ENCODE measurements at regions of chr18 and their contacts with region 1.

Region 1: GRCh38 chr18:50307738-50308470 is 20.4 kb upstream of the CXXC1 start:
- DNase-seq: peak; percentile 73
- ATAC-seq: peak; percentile 88
- H3K4me3 ChIP-seq: peak overlapping the region; percentile 52; the same call in 1 of the 2 replicates
- H3K27ac ChIP-seq: peak overlapping the region; percentile 66
- H3K4me1 ChIP-seq: peaks cover 34% of the 10 kb centered on the region
- H3K27me3 ChIP-seq: no peaks in the 10 kb centered on the region
- CTCF ChIP-seq: no peak
- EP300 ChIP-seq: no peak
- POLR2A ChIP-seq: no peak; the same call in none of the 2 replicates
- RAD21 ChIP-seq: no peak

Region 2: DNA sequence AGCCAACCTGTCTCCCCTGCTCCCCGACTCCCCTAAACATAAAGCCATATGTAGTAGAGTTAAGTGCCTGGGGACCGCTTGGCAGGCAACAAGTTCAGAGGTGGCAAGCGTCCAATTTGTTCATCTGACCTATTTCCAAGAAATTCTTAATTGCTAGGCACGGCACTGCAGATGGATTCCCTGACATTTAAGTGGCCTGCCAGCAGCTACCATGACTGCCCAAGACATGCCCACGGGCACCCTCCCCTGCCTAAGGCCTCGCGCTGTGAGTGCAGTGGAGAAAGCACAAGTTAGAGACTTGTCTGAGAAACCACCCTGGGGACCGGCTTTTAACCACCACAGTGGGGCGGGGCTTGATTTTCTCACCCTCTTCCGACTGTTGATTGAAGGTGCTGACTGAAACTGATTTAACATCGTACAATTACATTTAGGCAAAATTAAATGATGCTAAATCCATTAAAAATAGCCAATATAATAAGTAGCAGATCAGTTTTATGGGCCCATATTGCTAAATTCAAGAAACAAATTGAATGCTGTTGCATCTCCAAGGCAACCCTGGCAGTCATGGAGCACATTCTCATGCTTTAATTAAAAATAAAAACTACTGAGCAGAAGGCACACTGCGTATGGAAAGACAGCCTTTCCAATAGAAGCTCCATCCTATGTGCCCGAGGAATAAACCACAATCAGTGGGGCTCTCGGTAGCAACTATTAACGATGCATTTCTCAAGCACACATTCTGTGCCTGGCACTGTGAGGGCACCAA is 330.9 kb before region 1 on chr18:
- CTCF ChIA-PET with region 1: no interaction called
- POLR2A ChIA-PET with region 1: no interaction called
- RAD21 ChIA-PET with region 1: no interaction called
- SMC1A ChIA-PET with region 1: no interaction called
- in situ Hi-C with region 1: no loop called
- intact Hi-C with region 1: no loop called
- DNase-seq: no peak
- ATAC-seq: peak; percentile 26; the same call in 2 of the 3 replicates
- H3K4me3 ChIP-seq: no peak overlapping the region
- H3K27ac ChIP-seq: no peak overlapping the region
- H3K4me1 ChIP-seq: no peaks in the 10 kb centered on the region
- H3K27me3 ChIP-seq: peaks cover 2 to 4% of the 10 kb centered on the region in 2 experiments; a peak in 3 of 4 replicates
- CTCF ChIP-seq: no peak
- EP300 ChIP-seq: no peak
- POLR2A ChIP-seq: no peak
- RAD21 ChIP-seq: no peak

Region 3: DNA sequence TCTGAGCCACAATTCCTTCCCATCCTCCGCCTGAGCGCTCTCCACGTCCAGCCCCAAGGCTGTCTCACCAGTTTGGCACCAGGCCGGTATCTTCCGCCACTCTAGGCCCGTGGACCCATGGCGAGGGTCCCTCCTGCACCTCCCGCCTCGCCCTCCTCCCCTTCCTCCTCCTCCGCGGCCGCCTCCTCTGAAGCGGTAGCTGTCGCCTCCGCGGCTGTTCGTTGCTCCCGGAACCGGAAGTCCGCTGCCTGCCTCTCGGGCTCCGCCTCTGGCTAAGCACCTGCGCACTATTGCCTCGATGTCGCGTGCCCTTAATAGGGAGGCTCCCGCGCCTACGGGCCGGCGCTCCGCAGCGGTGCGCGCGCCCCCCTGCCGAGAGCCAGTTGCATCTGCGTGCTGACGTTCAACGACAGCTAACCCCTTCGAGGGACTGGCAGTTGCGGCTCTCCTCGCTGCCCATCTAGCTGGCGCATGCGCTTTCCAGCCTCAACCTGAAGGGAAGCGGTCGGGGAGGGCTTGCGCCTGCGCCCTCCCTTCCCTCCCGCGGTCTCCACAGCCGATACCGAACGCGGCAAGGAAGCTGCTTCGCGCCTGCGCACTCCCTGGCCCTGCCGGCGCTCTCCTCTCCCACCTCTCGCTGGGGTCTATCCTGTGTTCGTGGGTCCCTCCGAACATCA is 26.5 kb before region 1 on chr18 and contains the start of gene MBD1:
- CTCF ChIA-PET with region 1: interaction called, 3 read pairs
- POLR2A ChIA-PET with region 1: interaction called, 15 read pairs
- RAD21 ChIA-PET with region 1: interaction called, 4 read pairs
- SMC1A ChIA-PET with region 1: no interaction called
- in situ Hi-C with region 1: no loop called
- intact Hi-C with region 1: loop called (anchors 1 kb)
- DNase-seq: peak; percentile 96
- ATAC-seq: peak; percentile 96
- H3K4me3 ChIP-seq: peak within 1 kb of the TSS; percentile 99
- H3K27ac ChIP-seq: peak within 1 kb of the TSS; percentile 88
- H3K4me1 ChIP-seq: peaks cover 16% of the 10 kb centered on the region
- H3K27me3 ChIP-seq: no peaks in the 10 kb centered on the region
- CTCF ChIP-seq: peak in 2 of 3 experiments; percentile 17 to 26; a peak in 1 of 6 replicates
- EP300 ChIP-seq: no peak
- POLR2A ChIP-seq: no peak
- RAD21 ChIP-seq: no peak
- polyA plus RNA-seq, gene MBD1: 8.4 to 12.4 TPM

Region 4: DNA sequence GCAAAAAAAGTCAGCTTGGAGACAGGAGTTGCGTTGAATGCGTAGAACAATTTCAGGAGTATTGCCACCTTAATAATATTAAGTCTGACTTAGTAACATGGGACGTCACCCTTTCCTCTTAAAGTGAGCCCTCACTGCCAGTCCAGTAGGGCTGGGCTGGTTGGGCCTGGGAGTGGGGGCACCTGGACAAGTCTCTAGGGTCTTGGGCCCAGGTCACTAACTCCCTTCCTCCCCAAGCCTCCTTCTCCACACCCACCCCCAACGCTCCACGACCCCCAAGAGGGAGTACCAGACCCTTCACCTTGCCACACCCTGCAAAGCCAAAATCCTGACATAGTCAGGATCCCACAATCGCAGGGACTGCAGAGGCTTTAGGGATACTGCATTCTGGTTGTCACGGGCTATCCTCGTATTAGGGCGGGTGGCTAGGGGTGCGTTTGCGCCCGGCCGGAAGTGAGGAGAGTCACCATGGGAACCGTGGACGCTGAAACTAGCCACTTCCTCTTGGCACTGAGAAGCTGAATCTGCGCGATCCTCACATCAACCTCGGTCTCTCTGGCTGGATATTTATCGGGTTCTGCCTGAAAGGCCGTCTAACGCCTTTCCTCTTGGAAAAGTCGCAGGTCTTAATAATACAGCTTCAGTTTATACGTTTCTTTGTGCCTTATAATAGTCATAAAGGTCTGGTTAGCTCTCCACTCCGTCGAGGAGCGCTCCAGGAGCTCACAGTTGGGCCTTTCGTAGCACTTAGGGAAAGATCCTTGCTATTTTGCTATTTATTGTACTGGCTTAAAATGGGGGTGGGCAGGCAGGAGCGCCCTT is 10.1 kb before region 1 on chr18:
- CTCF ChIA-PET with region 1: interaction called, 4 read pairs
- POLR2A ChIA-PET with region 1: interaction called, 6 read pairs
- RAD21 ChIA-PET with region 1: interaction called, 5 read pairs
- SMC1A ChIA-PET with region 1: interaction called, 10 read pairs
- in situ Hi-C with region 1: no loop called
- intact Hi-C with region 1: no loop called
- DNase-seq: peak; percentile 69
- ATAC-seq: peak; percentile 100
- H3K4me3 ChIP-seq: peak overlapping the region; percentile 56; the same call in 1 of the 2 replicates
- H3K27ac ChIP-seq: no peak overlapping the region
- H3K4me1 ChIP-seq: peaks cover 7% of the 10 kb centered on the region
- H3K27me3 ChIP-seq: no peaks in the 10 kb centered on the region; a peak in 1 of 4 replicates
- CTCF ChIP-seq: no peak
- EP300 ChIP-seq: 0 out of 4 replicates have a peak, but pooled peaks of 1 of the 2 experiments have one; percentile 29
- POLR2A ChIP-seq: no peak
- RAD21 ChIP-seq: no peak

Region 5: GRCh38 chr18:50334546-50335152 is 26.7 kb after region 1 on chr18:
- CTCF ChIA-PET with region 1: interaction called, 3 read pairs
- POLR2A ChIA-PET with region 1: interaction called, 4 read pairs
- RAD21 ChIA-PET with region 1: no interaction called
- SMC1A ChIA-PET with region 1: interaction called, 25 read pairs
- in situ Hi-C with region 1: no loop called
- intact Hi-C with region 1: no loop called
- DNase-seq: peak; percentile 71
- ATAC-seq: peak; percentile 78
- H3K4me3 ChIP-seq: peak overlapping the region; percentile 2; the same call in 1 of the 2 replicates
- H3K27ac ChIP-seq: peak overlapping the region; percentile 31
- H3K4me1 ChIP-seq: peaks cover 49% of the 10 kb centered on the region
- H3K27me3 ChIP-seq: no peaks in the 10 kb centered on the region
- CTCF ChIP-seq: no peak
- EP300 ChIP-seq: peak; percentile 43 to 66; a peak in 3 of 4 replicates
- POLR2A ChIP-seq: no peak
- RAD21 ChIP-seq: no peak